Gastrocnemius medialis (tissue), 4 donors: ENCODE measurements at regions of chr22 and their contacts with region 1.

Region 1: GRCh38 chr22:25120093-25120561 is 79.5 kb upstream of the CRYBB3 start:
- DNase-seq: peak in 1 of 2 donors; percentile 72
- ATAC-seq: peak; percentile 53 to 67
- H3K4me3 ChIP-seq: no peak overlapping the region
- H3K27ac ChIP-seq: peak overlapping the region; percentile 66 to 96 (median 82)
- H3K4me1 ChIP-seq: peaks cover 16 to 41% of the 10 kb centered on the region in 2 donors
- H3K27me3 ChIP-seq: no peaks in the 10 kb centered on the region
- CTCF ChIP-seq: no peak
- POLR2A ChIP-seq: peak in 1 of 2 donors; percentile 9

Region 2: GRCh38 chr22:25134028-25134427 is 13.9 kb after region 1 on chr22:
- in situ Hi-C with region 1: no loop called
- intact Hi-C with region 1: loop called (anchors 1 kb)
- DNase-seq: no peak
- ATAC-seq: peak in 1 of 2 donors; percentile 15
- H3K4me3 ChIP-seq: no peak overlapping the region
- H3K27ac ChIP-seq: peak overlapping the region; percentile 73 to 90 (median 83)
- H3K4me1 ChIP-seq: peaks cover 57 to 93% of the 10 kb centered on the region in 2 donors
- H3K27me3 ChIP-seq: no peaks in the 10 kb centered on the region
- CTCF ChIP-seq: no peak
- POLR2A ChIP-seq: no peak